Activated CD4-positive, alpha-beta T cell treated with anti-CD3 and anti-CD28 coated beads, Interleukin-2, amount 10 ng/mL, durations not matched to agents 24 days and 14 days (primary cell): ENCODE measurements at regions of chr2 and their contacts with region 1.

Region 1: DNA sequence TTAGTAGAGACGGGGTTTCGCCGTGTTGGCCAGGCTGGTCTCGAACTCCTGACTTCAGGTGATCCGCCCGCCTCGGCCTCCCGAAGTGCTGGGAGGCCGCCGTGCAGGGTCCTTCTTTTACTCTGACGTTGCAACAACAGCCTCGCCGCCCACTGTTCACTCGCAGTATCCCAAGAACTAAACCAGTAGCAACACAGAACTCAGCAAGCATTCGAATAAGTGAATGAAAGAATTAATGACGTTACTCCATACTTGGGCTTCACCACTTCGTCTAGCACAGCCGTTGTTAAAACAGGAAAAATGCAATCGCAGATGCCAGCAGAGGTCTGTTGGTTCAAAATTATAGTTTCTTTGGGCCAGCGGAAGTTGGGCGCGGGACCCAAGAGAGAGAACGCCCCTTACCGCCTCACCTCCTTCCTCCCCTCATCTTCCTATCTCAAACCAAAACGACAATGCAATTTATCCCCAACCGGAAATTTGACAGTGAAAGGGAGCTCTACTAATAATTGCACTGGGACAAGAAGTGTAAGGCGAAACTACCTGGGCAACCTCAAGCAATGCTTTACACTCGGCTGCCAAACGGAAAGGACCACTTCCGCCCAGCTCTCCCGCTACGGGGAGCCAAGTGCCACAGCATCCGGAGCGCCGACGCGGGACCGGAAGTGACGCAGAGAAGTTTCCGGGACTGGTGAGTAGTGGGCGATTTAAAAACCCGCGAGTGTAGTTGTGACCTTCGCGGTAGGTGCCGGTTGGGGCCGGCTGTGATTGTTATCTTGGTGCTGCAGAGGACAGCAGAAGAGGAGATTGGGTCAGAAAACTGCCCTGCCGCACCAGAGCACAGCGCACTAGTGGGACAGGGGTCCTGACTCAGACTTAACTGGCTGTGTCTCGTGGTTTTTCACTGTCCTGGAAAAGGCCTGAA is at the starts of genes NIF3L1 and PPIL3:
- DNase-seq: peak; percentile 99
- H3K4me3 Mint-ChIP-seq: peak within 1 kb of the TSS; percentile 92
- H3K27ac Mint-ChIP-seq: peak within 1 kb of the TSS; percentile 99
- H3K4me1 Mint-ChIP-seq: peaks cover 46% of the 10 kb centered on the region
- H3K27me3 Mint-ChIP-seq: no peaks in the 10 kb centered on the region
- total RNA-seq, gene NIF3L1: 30.7 and 33.4 TPM in 2 replicates
- total RNA-seq, gene PPIL3: 52.6 and 52.8 TPM in 2 replicates

Region 2: GRCh38 chr2:200713003-200713703 is 175.8 kb before region 1 on chr2:
- intact Hi-C with region 1: loop called (anchors 1 kb)
- DNase-seq: peak; percentile 97
- H3K4me3 Mint-ChIP-seq: peak overlapping the region; percentile 74
- H3K27ac Mint-ChIP-seq: peak overlapping the region; percentile 99
- H3K4me1 Mint-ChIP-seq: peaks cover 29% of the 10 kb centered on the region
- H3K27me3 Mint-ChIP-seq: no peaks in the 10 kb centered on the region

Region 3: DNA sequence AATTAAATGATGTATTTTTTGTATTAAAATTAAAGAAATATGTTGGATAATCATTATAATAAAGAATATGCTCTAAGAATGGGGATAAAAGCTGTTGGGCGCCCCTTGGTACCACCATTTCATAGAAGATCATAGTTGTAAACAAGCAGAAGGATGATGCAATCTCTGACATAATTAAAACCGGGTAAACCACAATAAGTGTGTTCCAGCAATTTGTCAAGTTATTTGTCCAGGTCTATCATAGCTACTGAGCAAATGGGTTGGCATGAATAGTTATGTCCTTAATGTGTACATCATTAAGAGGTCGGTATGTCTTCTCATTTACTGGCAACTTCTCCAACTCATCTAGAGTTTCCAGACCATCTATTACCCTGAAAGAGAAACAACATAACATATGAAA is 17.8 kb before region 1 on chr2:
- intact Hi-C with region 1: loop called (anchors 1 kb)
- DNase-seq: no peak
- H3K4me3 Mint-ChIP-seq: no peak overlapping the region
- H3K27ac Mint-ChIP-seq: no peak overlapping the region
- H3K4me1 Mint-ChIP-seq: peaks cover 10% of the 10 kb centered on the region
- H3K27me3 Mint-ChIP-seq: no peaks in the 10 kb centered on the region

Region 4: DNA sequence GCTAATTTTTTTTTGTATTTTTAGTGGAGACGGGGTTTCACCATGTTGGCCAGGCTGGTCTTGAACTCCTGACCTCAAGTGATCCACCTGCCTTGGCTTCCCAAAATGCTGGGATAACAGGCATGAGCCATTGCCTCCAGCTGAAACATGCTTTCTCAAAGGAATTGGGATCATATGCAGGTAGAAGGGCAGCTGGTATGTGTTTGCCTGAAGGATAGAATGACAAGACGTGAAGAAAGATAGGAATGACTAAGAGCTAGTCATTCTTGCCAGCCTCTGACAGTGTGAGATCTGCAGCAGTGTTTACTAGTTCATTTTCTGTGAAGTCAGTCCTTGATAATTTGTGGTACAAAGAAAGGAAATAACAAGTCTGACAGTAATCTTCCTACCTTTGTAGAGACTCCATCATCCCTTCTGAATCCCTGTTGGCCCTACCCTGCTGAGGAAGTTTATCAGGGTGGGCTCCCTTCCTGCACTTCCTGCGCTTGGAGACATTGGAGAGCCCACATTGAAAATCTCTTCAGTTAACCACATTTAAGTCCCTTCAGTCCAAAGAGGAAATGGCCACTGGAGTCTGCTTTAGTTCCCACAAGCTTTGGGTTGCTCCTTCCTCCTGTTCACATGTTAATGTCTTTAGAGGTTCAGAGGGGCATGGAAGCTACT is 241.7 kb after region 1 on chr2:
- intact Hi-C with region 1: loop called (anchors 1 kb)
- DNase-seq: peak; percentile 80
- H3K4me3 Mint-ChIP-seq: peak overlapping the region; percentile 81
- H3K27ac Mint-ChIP-seq: peak overlapping the region; percentile 100
- H3K4me1 Mint-ChIP-seq: peaks cover 51% of the 10 kb centered on the region
- H3K27me3 Mint-ChIP-seq: no peaks in the 10 kb centered on the region